ENCODE measurements at regions of chr6 and their contacts with region 1.

Region 1: DNA sequence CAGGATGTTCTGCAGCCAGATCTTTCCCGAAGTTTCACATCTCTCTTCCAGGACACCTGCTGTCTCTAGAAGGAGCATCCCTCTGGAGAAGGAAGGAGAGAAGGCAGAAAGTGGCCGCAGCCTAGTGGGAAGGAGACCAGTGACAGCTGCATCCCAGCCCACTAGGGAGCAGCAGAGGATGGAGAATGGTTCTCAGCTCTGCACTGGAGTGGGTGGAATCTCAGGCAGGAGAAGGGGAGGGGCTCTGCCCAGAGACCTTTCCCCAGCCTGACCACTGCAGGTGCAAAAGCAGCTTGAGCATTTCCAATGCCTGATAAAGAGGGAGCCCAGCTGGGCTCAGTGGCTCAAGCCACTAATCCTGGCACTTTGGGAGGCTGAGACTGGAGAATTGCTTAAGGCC is 32.3 kb downstream of the NCR2 start:
- DNase-seq: peak; percentile 85
- H3K4me3 ChIP-seq: no peak overlapping the region; a peak in 1 of 4 replicates
- H3K27ac ChIP-seq: no peak overlapping the region
- H3K4me1 ChIP-seq: peaks cover 0 to 2% of the 10 kb centered on the region in 2 experiments; a peak in 1 of 4 replicates
- H3K27me3 ChIP-seq: peaks cover 56% of the 10 kb centered on the region
- CTCF ChIP-seq: peak; percentile 75
- EP300 ChIP-seq: no peak
- RAD21 ChIP-seq: peak; percentile 93

Region 2: GRCh38 chr6:41271901-41272395 is 95.8 kb before region 1 on chr6:
- CTCF ChIA-PET with region 1: no interaction called
- POLR2A ChIA-PET with region 1: no interaction called
- DNase-seq: no peak
- H3K4me3 ChIP-seq: no peak overlapping the region
- H3K27ac ChIP-seq: no peak overlapping the region
- H3K4me1 ChIP-seq: peaks cover 0 to 8% of the 10 kb centered on the region in 2 experiments; a peak in 2 of 4 replicates
- H3K27me3 ChIP-seq: peaks cover 5% of the 10 kb centered on the region; the same call in 1 of the 2 replicates
- CTCF ChIP-seq: no peak
- EP300 ChIP-seq: no peak
- RAD21 ChIP-seq: no peak

Region 3: GRCh38 chr6:41318654-41319565 is 48.8 kb before region 1 on chr6:
- CTCF ChIA-PET with region 1: interaction called, 12 read pairs
- POLR2A ChIA-PET with region 1: no interaction called
- DNase-seq: peak; percentile 84
- H3K4me3 ChIP-seq: peak overlapping the region; percentile 28 to 60
- H3K27ac ChIP-seq: no peak overlapping the region
- H3K4me1 ChIP-seq: peaks cover 0 to 2% of the 10 kb centered on the region in 2 experiments; a peak in 1 of 4 replicates
- H3K27me3 ChIP-seq: peaks cover 20% of the 10 kb centered on the region
- CTCF ChIP-seq: peak; percentile 97
- EP300 ChIP-seq: no peak
- RAD21 ChIP-seq: peak; percentile 88

Region 4: GRCh38 chr6:41396335-41396734 is 28.6 kb after region 1 on chr6:
- CTCF ChIA-PET with region 1: interaction called, 19 read pairs
- POLR2A ChIA-PET with region 1: no interaction called
- DNase-seq: no peak
- H3K4me3 ChIP-seq: no peak overlapping the region
- H3K27ac ChIP-seq: no peak overlapping the region
- H3K4me1 ChIP-seq: no peaks in the 10 kb centered on the region
- H3K27me3 ChIP-seq: peaks cover 40% of the 10 kb centered on the region
- CTCF ChIP-seq: no peak
- EP300 ChIP-seq: no peak
- RAD21 ChIP-seq: no peak

Region 5: GRCh38 chr6:41463062-41463930 is 95.6 kb after region 1 on chr6:
- CTCF ChIA-PET with region 1: interaction called, 30 read pairs
- POLR2A ChIA-PET with region 1: no interaction called
- DNase-seq: peak; percentile 83
- H3K4me3 ChIP-seq: no peak overlapping the region; a peak in 1 of 4 replicates
- H3K27ac ChIP-seq: no peak overlapping the region
- H3K4me1 ChIP-seq: peaks cover 0 to 5% of the 10 kb centered on the region in 2 experiments; a peak in 1 of 4 replicates
- H3K27me3 ChIP-seq: no peaks in the 10 kb centered on the region
- CTCF ChIP-seq: peak; percentile 71
- EP300 ChIP-seq: no peak
- RAD21 ChIP-seq: peak; percentile 93

Region 6: DNA sequence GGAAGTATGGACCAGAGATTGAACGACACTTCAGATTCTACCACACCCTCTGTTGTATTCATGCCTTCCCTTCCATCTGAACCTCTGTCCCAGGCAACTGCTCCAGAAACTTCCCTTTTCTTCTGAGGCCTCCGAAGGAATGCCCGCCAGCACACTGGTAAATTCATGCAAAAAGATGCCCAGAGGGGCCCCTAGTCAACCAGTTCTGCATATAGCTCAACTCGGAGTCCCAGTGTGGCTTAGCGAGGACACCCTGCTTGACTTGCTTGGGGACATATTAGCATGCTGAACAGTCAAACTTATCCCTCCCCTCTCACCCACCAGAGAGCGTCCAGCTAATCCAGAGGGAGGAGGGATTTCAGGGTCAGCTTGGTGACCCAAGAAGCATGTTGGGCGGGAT is 247.6 kb after region 1 on chr6:
- CTCF ChIA-PET with region 1: interaction called, 13 read pairs
- POLR2A ChIA-PET with region 1: no interaction called
- DNase-seq: no peak
- H3K4me3 ChIP-seq: no peak overlapping the region
- H3K27ac ChIP-seq: no peak overlapping the region
- H3K4me1 ChIP-seq: no peaks in the 10 kb centered on the region
- H3K27me3 ChIP-seq: no peaks in the 10 kb centered on the region
- CTCF ChIP-seq: no peak
- EP300 ChIP-seq: no peak
- RAD21 ChIP-seq: no peak

Region 7: DNA sequence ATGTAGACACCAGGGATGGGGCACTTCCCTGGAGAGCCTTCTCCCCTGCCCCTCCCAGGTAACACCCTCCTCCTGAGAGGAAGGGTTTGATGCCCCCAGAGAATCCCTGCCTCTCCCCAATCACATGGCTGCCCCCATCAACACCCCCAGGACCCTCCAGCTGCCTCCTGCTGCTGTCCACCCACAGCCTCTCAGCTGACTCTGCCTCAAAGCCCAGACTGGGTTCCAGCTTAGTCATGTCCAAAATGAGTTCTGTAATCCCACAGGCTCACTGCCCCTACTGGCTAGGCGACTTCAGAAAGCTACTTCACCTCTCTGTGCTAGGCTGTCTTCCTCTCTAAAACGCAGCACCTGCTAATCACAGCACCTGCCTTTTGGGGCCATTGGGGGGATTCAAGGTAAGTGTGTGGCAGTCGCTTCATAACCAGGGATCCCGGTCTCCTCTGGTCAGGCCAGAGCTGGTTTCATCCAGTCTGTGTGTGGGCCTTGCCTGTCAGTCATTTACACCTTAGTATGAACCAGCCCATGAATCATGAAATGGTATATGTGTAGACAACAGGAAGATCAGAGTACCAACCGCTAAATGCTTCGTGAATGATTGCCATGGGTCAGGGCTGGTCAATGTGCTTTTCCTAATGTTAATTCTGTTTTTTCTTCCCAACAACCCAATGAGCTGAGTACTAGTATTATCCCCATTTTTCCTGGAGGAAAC is 327.3 kb after region 1 on chr6:
- CTCF ChIA-PET with region 1: interaction called, 285 read pairs
- POLR2A ChIA-PET with region 1: no interaction called
- DNase-seq: no peak
- H3K4me3 ChIP-seq: no peak overlapping the region
- H3K27ac ChIP-seq: no peak overlapping the region
- H3K4me1 ChIP-seq: peaks cover 19 to 30% of the 10 kb centered on the region in 2 experiments
- H3K27me3 ChIP-seq: no peaks in the 10 kb centered on the region
- CTCF ChIP-seq: no peak; the same call in 1 of the 2 replicates
- EP300 ChIP-seq: no peak
- RAD21 ChIP-seq: no peak

Region 8: GRCh38 chr6:41787219-41787917 is 419.7 kb after region 1 on chr6 and contains the start of gene TOMM6:
- CTCF ChIA-PET with region 1: interaction called, 31 read pairs
- POLR2A ChIA-PET with region 1: no interaction called
- DNase-seq: peak; percentile 91
- H3K4me3 ChIP-seq: peak within 1 kb of the TSS; percentile 66 to 100
- H3K27ac ChIP-seq: peak within 1 kb of the TSS; percentile 90 to 93
- H3K4me1 ChIP-seq: peaks cover 9 to 17% of the 10 kb centered on the region in 2 experiments; a peak in 2 of 4 replicates
- H3K27me3 ChIP-seq: no peaks in the 10 kb centered on the region
- CTCF ChIP-seq: peak; percentile 70
- EP300 ChIP-seq: no peak
- RAD21 ChIP-seq: peak; percentile 13; the same call in 1 of the 2 replicates
- polyA plus RNA-seq, gene TOMM6: 493 and 565 TPM in 2 replicates

Region 9: GRCh38 chr6:43053545-43054205 is 1686.0 kb after region 1 on chr6 and contains the start of gene CUL7:
- CTCF ChIA-PET with region 1: no interaction called
- POLR2A ChIA-PET with region 1: no interaction called
- DNase-seq: peak; percentile 98
- H3K4me3 ChIP-seq: peak within 1 kb of the TSS; percentile 78 to 95
- H3K27ac ChIP-seq: peak within 1 kb of the TSS; percentile 87 to 88
- H3K4me1 ChIP-seq: peaks cover 11 to 32% of the 10 kb centered on the region in 2 experiments
- H3K27me3 ChIP-seq: no peaks in the 10 kb centered on the region
- CTCF ChIP-seq: no peak; the same call in 1 of the 2 replicates
- EP300 ChIP-seq: no peak
- RAD21 ChIP-seq: no peak
- polyA plus RNA-seq, gene CUL7: 46.9 and 59.6 TPM in 2 replicates

Measured in SK-N-SH (cell line).